ENCODE measurements at regions of chr5 and their contacts with region 1.

Region 1: DNA sequence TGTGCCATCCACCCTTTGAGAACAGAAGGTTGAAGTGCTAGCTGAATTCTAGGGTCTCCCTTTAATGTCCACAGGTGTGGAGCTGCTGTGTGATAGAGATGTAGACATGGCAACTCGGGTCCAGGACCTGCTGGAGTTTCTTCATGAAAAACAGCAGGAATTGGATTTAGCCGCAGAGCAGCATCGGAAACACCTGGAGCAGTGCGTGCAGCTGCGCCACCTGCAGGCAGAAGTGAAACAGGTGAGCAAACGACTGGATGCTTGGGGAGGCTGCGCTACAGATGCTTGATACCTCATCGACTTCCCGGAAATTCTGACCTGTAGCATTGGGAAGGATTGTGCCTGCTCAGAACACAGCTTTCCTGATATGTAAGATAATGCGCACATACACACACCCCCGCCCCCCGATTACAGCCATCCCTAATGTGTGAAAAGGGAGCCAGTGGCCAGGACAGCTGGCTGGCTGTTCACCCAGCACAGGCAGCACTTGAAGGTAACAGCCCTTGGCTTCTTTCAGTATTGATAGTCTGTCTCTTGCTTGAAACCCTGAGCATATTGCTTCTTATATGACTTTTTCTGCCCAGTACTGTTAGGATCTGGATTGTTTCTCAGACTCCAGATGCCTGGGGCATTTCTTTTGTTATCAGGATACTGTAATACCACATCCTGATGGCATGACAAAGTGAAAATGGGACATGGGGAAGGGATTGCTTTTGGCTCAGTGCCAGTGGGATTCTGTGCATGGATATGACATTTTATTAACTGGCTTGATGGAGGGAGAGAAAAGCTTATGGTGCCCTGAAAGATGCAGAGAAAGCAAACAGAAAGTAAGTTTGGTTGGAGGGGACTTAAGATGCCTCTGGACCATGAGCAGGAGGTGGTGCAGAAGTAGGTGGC is 216.8 kb upstream of the OTULINL start:
- DNase-seq: no peak
- ATAC-seq: no peak
- H3K4me3 ChIP-seq: no peak overlapping the region
- H3K4me3 Mint-ChIP-seq: peak overlapping the region in 1 of 10 donors; percentile 48
- H3K27ac ChIP-seq: no peak overlapping the region
- H3K27ac Mint-ChIP-seq: peak overlapping the region in 4 of 9 donors; percentile 13 to 73 (median 46)
- H3K4me1 ChIP-seq: peaks cover 9 to 12% of the 10 kb centered on the region in 2 donors
- H3K4me1 Mint-ChIP-seq: peaks cover 17 to 55% (median 28%) of the 10 kb centered on the region in 7 donors
- H3K27me3 ChIP-seq: no peaks in the 10 kb centered on the region
- H3K27me3 Mint-ChIP-seq: no peaks in the 10 kb centered on the region

Region 2: DNA sequence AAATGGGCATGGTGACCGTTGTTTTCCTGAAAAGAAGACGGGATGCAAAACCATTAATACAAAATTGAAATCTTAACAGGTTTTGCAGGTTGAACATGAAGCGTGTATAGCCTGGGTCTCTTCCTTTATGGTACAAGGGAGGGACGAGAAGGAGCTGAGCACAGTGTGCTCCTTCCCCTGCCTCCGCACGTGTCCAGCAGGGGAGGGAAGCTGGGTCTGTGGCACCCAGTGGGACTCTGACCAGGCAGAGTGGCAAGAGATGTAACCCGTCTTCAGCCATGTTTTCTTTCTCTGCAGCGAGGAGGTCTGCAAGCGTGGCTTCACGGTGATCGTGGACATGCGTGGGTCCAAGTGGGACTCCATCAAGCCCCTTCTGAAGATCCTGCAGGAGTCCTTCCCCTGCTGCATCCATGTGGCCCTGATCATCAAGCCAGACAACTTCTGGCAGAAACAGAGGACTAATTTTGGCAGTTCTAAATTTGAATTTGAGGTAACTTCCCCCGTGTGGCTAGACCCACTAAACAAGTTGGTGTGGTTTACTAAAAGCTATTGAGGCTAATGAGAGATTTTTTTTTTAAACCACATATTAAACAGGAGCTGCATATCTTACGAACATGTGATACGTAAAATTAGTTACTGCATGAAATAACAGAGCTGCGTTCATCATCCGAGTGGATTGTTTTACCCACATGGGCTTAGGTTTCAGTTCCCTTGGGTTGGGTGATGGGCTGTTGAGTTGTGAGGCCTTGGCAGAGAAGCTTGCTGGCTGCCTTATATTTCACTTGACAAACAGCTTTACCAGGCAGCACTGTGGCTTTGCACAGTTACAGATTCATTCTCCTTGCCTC is 78.0 kb before region 1 on chr5:
- CTCF ChIA-PET with region 1: no interaction called
- POLR2A ChIA-PET with region 1: no interaction called
- intact Hi-C with region 1: no loop called
- DNase-seq: no peak
- ATAC-seq: no peak
- H3K4me3 ChIP-seq: no peak overlapping the region
- H3K4me3 Mint-ChIP-seq: no peak overlapping the region
- H3K27ac ChIP-seq: no peak overlapping the region
- H3K27ac Mint-ChIP-seq: no peak overlapping the region
- H3K4me1 ChIP-seq: no peaks in the 10 kb centered on the region
- H3K4me1 Mint-ChIP-seq: peaks cover 0 to 1% (median 0%) of the 10 kb centered on the region in 7 donors
- H3K27me3 ChIP-seq: no peaks in the 10 kb centered on the region
- H3K27me3 Mint-ChIP-seq: no peaks in the 10 kb centered on the region

Region 3: DNA sequence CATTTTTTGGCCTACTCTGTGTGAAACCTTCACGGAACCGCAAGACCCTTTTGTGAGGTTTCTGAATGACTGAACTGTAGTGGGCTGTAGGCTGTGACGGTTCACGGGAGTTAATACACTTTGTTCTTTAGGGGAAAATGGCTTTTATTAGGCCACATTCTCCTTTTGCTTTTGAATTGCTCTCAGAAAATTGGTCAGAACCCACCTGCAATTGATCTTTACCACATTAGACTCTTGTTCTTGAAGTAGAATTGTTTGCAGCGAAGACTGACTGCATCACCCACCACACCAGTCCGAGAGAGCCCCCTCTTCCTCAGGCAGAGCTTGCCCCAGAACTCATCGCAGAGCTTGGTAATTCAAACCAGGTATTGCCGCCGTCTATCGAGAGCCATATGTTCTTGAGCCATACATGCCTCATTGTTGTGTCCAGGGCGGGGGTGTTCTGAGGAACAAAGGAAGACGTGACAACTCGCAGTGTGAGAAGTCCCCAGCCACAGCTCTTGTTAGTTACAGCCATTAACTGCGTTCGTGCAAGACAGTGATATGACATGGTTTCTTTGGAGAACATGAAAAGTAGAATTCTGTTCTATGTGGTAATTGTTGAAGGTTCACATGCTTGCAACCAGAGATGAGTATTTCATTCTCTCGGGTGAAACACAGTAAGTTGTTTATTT is 50.3 kb after region 1 on chr5:
- CTCF ChIA-PET with region 1: no interaction called
- POLR2A ChIA-PET with region 1: no interaction called
- intact Hi-C with region 1: loop called in 1 of 2 experiments (anchors 1 kb)
- DNase-seq: no peak
- ATAC-seq: no peak
- H3K4me3 ChIP-seq: peak overlapping the region; percentile 17
- H3K4me3 Mint-ChIP-seq: peak overlapping the region in 7 of 10 donors; percentile 57 to 87 (median 73)
- H3K27ac ChIP-seq: no peak overlapping the region
- H3K27ac Mint-ChIP-seq: peak overlapping the region; percentile 89 to 97 (median 94)
- H3K4me1 ChIP-seq: peaks cover 31 to 32% of the 10 kb centered on the region in 2 donors
- H3K4me1 Mint-ChIP-seq: peaks cover 26 to 52% (median 40%) of the 10 kb centered on the region in 7 donors
- H3K27me3 ChIP-seq: no peaks in the 10 kb centered on the region
- H3K27me3 Mint-ChIP-seq: no peaks in the 10 kb centered on the region

Region 4: DNA sequence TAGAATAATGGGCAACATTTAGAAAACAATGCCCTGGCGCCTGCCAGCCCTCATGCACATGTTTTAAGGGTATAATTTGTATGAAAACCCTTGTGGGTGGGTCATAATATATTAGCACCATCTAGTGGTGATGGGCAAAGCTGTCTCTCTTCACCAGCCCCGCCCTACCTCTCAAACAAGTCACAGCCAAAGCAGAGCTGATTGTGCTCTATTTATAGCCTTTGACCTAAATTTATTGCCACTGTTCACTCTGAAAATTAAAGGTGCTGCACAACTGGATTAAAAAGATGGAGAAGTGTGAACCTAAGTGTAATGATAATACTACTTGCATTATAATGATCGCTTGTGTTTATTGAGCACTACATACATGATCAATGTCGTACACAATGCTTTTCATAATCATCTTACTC is 638.7 kb after region 1 on chr5:
- CTCF ChIA-PET with region 1: interaction called, 4 read pairs
- POLR2A ChIA-PET with region 1: no interaction called
- intact Hi-C with region 1: loop called in 1 of 2 experiments (anchors 5 kb)
- DNase-seq: peak; percentile 10 to 77 (median 69)
- ATAC-seq: peak; percentile 96
- H3K4me3 ChIP-seq: no peak overlapping the region
- H3K4me3 Mint-ChIP-seq: no peak overlapping the region
- H3K27ac ChIP-seq: no peak overlapping the region
- H3K27ac Mint-ChIP-seq: peak overlapping the region in 1 of 9 donors; percentile 33
- H3K4me1 ChIP-seq: no peaks in the 10 kb centered on the region
- H3K4me1 Mint-ChIP-seq: peaks cover 0 to 20% (median 0%) of the 10 kb centered on the region in 7 donors
- H3K27me3 ChIP-seq: peaks cover 0 to 3% of the 10 kb centered on the region in 2 donors
- H3K27me3 Mint-ChIP-seq: peaks cover 0 to 38% (median 0%) of the 10 kb centered on the region in 5 donors

Measured in naive thymus-derived CD4-positive, alpha-beta T cell (primary cell).